H1 (cell line): ENCODE measurements at regions of chr3 and their contacts with region 1.

Region 1: GRCh38 chr3:126570103-126570541 is 11.4 kb upstream of the C3orf22 start:
- DNase-seq: peak in 1 of 2 experiments; percentile 50
- H3K4me3 ChIP-seq: no peak overlapping the region
- H3K27ac ChIP-seq: no peak overlapping the region
- H3K4me1 ChIP-seq: peaks cover 0 to 4% (median 1%) of the 10 kb centered on the region in 4 experiments; a peak in 2 of 7 replicates
- H3K27me3 ChIP-seq: no peaks in the 10 kb centered on the region; a peak in 1 of 7 replicates
- CTCF ChIP-seq: peak; percentile 36 to 50 (median 48)
- EP300 ChIP-seq: no peak
- POLR2A ChIP-seq: no peak
- RAD21 ChIP-seq: peak; percentile 21 to 43; a peak in 2 of 4 replicates

Region 2: GRCh38 chr3:126558336-126559071 is 11.6 kb before region 1 on chr3 and contains the start of gene C3orf22:
- CTCF ChIA-PET with region 1: interaction called, 10 read pairs
- POLR2A ChIA-PET with region 1: no interaction called
- DNase-seq: peak in 1 of 2 experiments; percentile 41
- H3K4me3 ChIP-seq: no peak within 1 kb of the TSS
- H3K27ac ChIP-seq: no peak within 1 kb of the TSS
- H3K4me1 ChIP-seq: no peaks in the 10 kb centered on the region
- H3K27me3 ChIP-seq: no peaks in the 10 kb centered on the region
- CTCF ChIP-seq: no peak
- EP300 ChIP-seq: no peak
- POLR2A ChIP-seq: no peak
- RAD21 ChIP-seq: no peak
- total RNA-seq, gene C3orf22: not detected in 2 replicates

Region 3: GRCh38 chr3:126781406-126781805 is 211.3 kb after region 1 on chr3:
- CTCF ChIA-PET with region 1: no interaction called
- POLR2A ChIA-PET with region 1: no interaction called
- DNase-seq: no peak
- H3K4me3 ChIP-seq: no peak overlapping the region
- H3K27ac ChIP-seq: no peak overlapping the region
- H3K4me1 ChIP-seq: peaks cover 9 to 18% (median 12%) of the 10 kb centered on the region in 4 experiments
- H3K27me3 ChIP-seq: no peaks in the 10 kb centered on the region
- CTCF ChIP-seq: no peak
- EP300 ChIP-seq: no peak
- POLR2A ChIP-seq: no peak
- RAD21 ChIP-seq: no peak